Esophagus squamous epithelium (tissue), 5 donors: ENCODE measurements at regions of chr6 and their contacts with region 1.

Region 1: DNA sequence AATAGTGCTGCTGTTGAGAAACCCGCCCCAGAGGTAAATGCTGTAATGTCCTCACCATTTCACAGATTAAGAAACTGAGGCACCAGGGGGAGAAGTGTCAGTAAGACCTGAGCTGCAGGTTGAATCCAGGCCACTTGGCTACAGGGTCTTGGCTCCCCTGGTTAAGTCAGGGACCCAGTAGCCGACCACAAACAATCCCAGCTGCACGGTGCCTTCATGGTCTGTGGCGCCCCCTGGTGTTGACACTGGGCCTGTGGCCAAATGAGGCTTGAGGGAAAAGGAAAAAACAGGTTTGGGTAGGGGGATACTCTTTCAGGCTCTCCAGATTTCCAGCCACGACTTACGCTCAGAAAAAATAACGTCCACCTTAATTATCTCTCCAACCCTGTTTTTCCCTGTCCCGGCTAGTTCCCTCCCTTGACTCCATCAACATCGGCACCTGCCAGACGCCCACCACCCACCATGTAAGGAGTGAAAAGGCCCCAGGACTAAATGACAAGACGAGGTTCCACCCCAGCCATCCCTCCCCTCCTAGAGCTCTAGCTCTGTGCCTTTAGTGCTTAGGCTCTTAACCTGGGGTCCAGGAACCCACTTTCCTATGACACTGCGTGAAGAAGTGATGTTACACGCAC is 47.7 kb upstream of the POLR1H start:
- DNase-seq: no peak
- H3K4me3 ChIP-seq: no peak overlapping the region
- H3K27ac ChIP-seq: no peak overlapping the region
- H3K4me1 ChIP-seq: no peaks in the 10 kb centered on the region
- H3K27me3 ChIP-seq: peaks cover 0 to 12% (median under 1%) of the 10 kb centered on the region in 4 donors
- CTCF ChIP-seq: peak in 5 of 6 experiments; percentile 10 to 87 (median 61)
- POLR2A ChIP-seq: no peak

Region 2: GRCh38 chr6:29850011-29850553 is 163.3 kb before region 1 on chr6:
- intact Hi-C with region 1: loop called (anchors 5 kb)
- DNase-seq: no peak
- H3K4me3 ChIP-seq: peak overlapping the region in 2 of 4 donors; percentile 27 to 56
- H3K27ac ChIP-seq: no peak overlapping the region
- H3K4me1 ChIP-seq: peaks cover 0 to 13% (median 4%) of the 10 kb centered on the region in 3 donors
- H3K27me3 ChIP-seq: peaks cover 0 to 60% (median 3%) of the 10 kb centered on the region in 4 donors
- CTCF ChIP-seq: no peak
- POLR2A ChIP-seq: no peak

Region 3: GRCh38 chr6:30102970-30103874 is 89.8 kb after region 1 on chr6:
- intact Hi-C with region 1: no loop called
- DNase-seq: peak; percentile 49
- H3K4me3 ChIP-seq: peak overlapping the region; percentile 27 to 66 (median 48)
- H3K27ac ChIP-seq: peak overlapping the region; percentile 83 to 93 (median 87)
- H3K4me1 ChIP-seq: peaks cover 22 to 42% (median 27%) of the 10 kb centered on the region in 3 donors
- H3K27me3 ChIP-seq: peaks cover 0 to 76% (median 0%) of the 10 kb centered on the region in 4 donors
- CTCF ChIP-seq: peak; percentile 83 to 97 (median 96)
- POLR2A ChIP-seq: peak in 1 of 4 donors; percentile 16